Transverse colon (tissue), 4 donors: ENCODE measurements at regions of chr3 and their contacts with region 1.

Region 1: GRCh38 chr3:41881233-41881821 is 80.6 kb downstream of the ULK4 start:
- DNase-seq: no peak
- H3K4me3 ChIP-seq: no peak overlapping the region
- H3K27ac ChIP-seq: no peak overlapping the region
- H3K4me1 ChIP-seq: no peaks in the 10 kb centered on the region
- H3K27me3 ChIP-seq: no peaks in the 10 kb centered on the region
- CTCF ChIP-seq: peak; percentile 68 to 78 (median 71)
- EP300 ChIP-seq: no peak
- POLR2A ChIP-seq: no peak

Region 2: DNA sequence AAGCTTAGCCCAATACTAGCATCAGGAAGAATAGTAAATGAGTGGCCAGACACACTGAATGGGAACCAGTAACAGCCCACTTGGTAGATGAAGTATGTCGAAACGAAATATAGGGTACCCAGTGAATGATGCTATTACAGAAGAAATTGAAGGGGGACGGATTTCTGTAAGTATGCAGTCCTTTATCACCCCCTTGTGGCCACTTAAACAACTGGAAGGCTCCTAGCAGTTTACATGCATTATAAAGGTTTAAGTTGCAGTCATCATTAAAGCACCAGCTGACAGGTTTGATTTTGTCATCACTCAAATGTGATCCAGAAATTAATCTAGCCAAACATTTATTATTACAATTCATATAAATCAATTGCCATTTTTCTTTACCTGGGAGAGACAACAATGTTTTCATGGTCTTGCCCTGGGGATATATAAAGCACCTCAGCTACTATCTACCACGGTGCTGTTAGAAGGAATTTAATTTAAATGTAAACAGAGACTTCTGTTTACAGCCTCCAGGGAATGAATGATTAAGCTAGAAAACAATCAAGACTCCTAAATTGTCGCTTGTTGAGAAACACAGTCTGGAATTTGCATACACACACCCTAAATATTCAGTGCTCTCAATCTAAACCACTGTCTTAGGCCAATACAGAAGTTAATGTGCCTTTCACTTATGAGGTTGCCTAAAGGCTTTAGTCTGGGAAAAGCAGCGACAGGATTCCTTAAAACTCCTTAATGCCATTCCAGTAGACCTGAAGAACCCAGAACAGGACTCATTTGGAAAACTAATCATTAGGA is 1564.1 kb before region 1 on chr3:
- in situ Hi-C with region 1: loop called in 1 of 4 experiments (anchors 10 kb)
- intact Hi-C with region 1: no loop called
- DNase-seq: peak; percentile 27
- H3K4me3 ChIP-seq: no peak overlapping the region
- H3K27ac ChIP-seq: no peak overlapping the region
- H3K4me1 ChIP-seq: peaks cover 0 to 24% (median 0%) of the 10 kb centered on the region in 4 donors
- H3K27me3 ChIP-seq: no peaks in the 10 kb centered on the region
- CTCF ChIP-seq: peak; percentile 78 to 88 (median 81)
- EP300 ChIP-seq: no peak
- POLR2A ChIP-seq: no peak

Region 3: GRCh38 chr3:40337136-40338108 is 1543.9 kb before region 1 on chr3:
- in situ Hi-C with region 1: loop called in 3 of 4 experiments (anchors 25 kb)
- intact Hi-C with region 1: no loop called
- DNase-seq: no peak
- H3K4me3 ChIP-seq: no peak overlapping the region
- H3K27ac ChIP-seq: no peak overlapping the region
- H3K4me1 ChIP-seq: no peaks in the 10 kb centered on the region
- H3K27me3 ChIP-seq: no peaks in the 10 kb centered on the region
- CTCF ChIP-seq: no peak
- EP300 ChIP-seq: no peak
- POLR2A ChIP-seq: no peak